Prostate gland (tissue), 2 donors: ENCODE measurements at regions of chr14 and their contacts with region 1.

Region 1: GRCh38 chr14:63760014-63760413 is 32.1 kb upstream of the SGPP1 start:
- DNase-seq: no peak
- H3K4me3 ChIP-seq: no peak overlapping the region
- H3K27ac ChIP-seq: no peak overlapping the region
- H3K4me1 ChIP-seq: no peaks in the 10 kb centered on the region
- H3K27me3 ChIP-seq: no peaks in the 10 kb centered on the region
- CTCF ChIP-seq: no peak
- POLR2A ChIP-seq: no peak

Region 2: DNA sequence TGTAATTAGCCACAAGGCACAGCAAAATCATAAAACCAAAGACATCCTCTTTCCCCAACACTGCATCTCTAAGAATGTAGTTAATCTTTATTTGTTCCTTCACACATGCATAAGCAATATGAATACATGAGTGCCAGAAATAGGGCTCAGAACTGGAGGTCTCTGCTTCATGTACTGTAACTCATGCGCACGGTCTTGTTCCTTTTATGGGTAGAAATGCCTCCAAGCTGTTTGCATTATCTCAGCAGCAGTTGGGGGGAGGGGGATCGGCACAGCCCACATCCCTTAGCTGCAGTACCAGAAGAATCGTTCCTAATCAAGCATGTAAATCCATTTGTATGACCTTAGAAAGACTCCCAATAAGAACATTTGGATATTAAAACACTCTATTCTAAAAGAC is 535.8 kb before region 1 on chr14:
- intact Hi-C with region 1: no loop called
- DNase-seq: no peak
- H3K4me3 ChIP-seq: no peak overlapping the region
- H3K27ac ChIP-seq: no peak overlapping the region
- H3K4me1 ChIP-seq: no peaks in the 10 kb centered on the region
- H3K27me3 ChIP-seq: no peaks in the 10 kb centered on the region
- CTCF ChIP-seq: no peak
- POLR2A ChIP-seq: no peak

Region 3: DNA sequence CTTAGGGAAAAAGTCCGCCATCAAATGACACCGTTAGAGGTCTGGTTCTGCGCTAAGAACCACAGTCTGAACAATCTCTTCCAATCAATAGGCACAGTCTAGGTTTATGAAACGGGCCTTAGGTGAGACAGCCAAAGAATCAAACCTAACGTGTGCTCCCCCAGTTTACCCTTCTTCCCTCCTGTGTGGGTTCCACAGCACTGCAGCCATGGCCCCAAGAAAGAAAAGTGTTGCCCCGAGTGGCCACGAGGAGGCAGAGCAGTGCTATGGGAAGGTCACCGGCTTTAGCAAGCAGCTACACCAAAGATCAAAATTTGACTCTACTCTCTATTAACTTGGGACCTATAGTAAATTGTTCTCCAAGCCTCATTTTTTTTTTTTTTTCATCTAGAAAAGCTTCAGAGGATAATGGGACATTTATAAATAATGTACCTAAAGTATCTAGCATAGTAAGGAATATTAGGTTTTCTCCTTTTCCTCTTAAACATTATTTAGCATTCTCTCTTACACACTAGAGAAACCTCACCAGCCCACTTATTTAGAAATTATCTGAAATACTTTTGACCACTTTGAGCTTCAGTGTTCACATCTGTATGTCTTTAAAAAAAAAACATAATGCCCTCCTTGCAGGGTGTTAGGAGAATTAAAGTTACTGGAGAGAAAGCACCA is 371.1 kb before region 1 on chr14:
- intact Hi-C with region 1: loop called (anchors 10 kb)
- DNase-seq: peak; percentile 30
- H3K4me3 ChIP-seq: no peak overlapping the region
- H3K27ac ChIP-seq: no peak overlapping the region
- H3K4me1 ChIP-seq: no peaks in the 10 kb centered on the region
- H3K27me3 ChIP-seq: no peaks in the 10 kb centered on the region
- CTCF ChIP-seq: peak; percentile 59 to 84 (median 73)
- POLR2A ChIP-seq: no peak